GM13976 (cell line): ENCODE measurements at regions of chr6 and their contacts with region 1.

Region 1: GRCh38 chr6:150813319-150813992 is 52.0 kb upstream of the MTHFD1L start:
- DNase-seq: peak; percentile 76
- CTCF ChIP-seq: no peak

Region 2: DNA sequence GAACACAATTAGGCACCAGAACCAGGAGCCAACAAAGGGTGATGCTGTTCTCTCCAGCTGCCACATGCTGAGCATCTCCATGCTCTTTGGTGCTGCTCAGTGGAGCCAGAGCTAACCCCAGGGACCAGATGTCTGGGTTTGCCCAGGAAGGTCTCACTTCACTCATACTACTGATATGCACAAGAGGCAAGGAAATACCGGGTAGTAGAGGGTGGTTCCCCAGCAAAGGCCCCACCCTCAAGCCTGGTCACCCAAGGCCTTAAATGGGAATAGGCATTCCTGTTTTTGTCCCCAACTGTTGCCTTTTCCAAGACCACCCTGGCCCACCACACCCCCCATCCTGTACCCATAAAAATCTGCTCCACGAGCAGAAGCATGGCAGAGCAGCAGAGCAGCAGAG is 1700.5 kb before region 1 on chr6:
- in situ Hi-C with region 1: no loop called
- DNase-seq: peak; percentile 40
- CTCF ChIP-seq: no peak

Region 3: DNA sequence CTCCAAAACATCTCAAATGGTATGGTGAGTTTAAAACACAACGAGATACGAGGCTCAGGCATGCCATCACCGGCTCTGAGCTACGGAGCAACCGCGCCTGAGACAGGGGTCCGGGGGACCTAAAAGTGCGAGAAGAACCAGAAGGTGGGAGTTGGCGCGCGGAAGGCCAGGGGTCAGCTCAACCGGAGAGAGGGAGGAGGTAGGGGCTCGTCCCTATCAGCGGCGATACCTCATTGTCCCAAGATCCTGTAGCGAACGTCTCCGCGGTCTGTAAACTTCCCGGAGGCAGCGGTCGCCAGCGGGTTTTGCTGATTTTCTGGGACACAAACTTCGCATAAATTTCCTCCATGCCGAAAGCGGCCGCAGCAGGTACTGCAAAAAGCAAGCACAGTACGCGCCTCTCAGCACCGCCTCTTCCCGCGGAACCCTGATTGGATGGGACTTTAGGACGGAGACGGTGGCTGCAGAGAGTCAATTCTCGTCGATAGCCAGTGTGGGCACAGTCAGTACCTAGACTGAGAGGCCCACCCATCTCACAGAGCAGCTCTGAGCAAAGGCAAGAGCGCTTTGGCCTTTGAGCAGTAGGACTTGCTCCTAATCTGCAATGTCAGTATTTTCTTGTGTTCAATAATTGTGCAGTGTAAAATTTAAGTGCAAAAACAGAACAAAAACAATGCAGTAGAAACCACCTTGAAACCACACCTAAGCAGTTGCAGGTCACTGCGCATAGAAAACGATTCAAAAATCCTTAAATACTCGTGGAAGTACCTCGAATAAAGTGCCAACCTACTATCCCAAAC is 1067.1 kb before region 1 on chr6 and contains the start of gene NUP43:
- in situ Hi-C with region 1: no loop called
- DNase-seq: peak; percentile 89
- CTCF ChIP-seq: no peak

Region 4: DNA sequence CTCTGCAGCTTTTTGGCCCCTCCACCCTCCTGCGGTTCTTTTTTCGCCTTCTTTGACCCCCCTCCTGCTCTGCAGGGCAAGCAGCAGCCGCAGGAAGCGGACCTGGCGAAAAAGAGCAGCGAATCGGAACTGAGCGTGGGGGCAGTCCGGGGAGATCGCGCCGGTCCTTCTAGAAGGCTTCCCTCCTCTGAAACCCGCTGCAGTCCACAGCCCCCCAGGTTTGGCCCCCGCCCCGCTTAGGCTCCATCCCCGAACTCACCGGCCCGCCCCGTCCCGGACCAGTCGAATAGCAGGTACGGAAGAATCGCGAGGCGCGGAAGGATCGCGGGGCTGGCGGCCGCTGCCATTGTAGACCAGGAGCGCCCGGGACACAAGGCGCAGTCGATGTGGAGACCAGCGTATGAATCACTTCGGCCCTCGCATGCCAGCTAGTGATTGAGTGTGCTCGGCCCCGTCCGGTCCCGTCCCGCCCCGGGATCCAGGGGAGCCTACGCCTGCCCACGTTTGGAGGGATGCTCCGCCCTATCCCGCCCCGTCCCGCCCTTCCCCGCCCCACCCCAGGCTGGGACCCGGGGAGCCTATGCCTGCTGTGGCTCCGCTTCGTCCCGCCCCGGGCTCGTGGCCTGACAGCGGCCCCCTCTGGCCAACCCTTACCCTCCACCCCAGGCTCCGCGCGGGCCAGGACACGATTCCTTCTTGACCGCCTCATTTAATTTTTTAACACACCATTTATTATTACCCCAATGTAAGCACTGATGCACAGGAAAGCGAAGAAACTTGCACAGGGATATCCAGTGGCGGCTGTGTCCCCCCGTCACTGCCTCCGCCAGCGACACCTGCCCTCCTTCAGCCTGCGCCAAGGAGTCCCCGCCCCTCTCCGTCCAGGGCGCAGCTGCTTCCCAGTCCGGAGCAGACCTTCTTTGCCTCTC is 744.5 kb before region 1 on chr6 and contains the start of gene ULBP3:
- in situ Hi-C with region 1: loop called (anchors 25 kb)
- DNase-seq: peak; percentile 90
- CTCF ChIP-seq: peak; percentile 33

Region 5: GRCh38 chr6:150409576-150410066 is 403.8 kb before region 1 on chr6:
- in situ Hi-C with region 1: loop called (anchors 5 kb)
- DNase-seq: no peak
- CTCF ChIP-seq: no peak